HEK293 (cell line): ENCODE measurements at regions of chr18 and their contacts with region 1.

Region 1: DNA sequence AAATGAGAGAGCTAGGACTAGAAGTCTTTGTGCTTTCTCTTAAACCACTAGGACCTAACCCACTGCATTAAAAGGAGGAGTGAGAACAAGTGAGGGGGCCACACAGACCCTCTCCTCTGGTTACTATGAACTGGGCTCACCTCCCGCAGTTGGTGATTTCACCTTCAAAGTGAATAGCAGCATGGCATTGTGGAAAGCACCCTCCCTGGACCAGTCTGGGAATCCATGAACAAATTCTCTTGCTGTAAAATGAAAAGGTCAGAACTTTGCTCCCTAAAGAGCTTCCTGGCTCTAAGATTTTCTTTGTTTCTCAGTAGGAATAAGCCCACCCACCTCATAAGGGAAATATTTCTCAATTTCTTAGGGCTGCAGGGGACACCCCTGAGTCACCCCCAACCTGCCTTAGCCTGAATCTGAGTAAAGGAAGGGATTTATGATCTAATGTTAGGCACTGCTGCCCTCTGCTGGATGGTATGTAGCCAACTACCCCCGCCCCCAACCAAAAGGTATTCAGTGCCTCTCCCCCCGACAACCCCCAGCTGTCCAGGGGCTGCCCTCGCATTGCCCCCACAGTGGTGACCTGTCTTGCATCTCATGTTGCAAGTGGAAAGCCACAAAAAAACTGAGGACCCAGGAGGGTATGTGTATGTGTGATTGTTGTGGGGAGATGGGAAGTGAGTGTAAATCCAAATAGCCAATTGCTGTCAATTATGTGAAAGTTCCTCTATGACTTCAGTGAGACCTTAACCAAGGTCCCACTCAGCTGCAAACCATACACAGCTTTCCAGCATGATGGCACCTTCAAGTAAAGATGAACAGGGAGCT is 230.9 kb upstream of the SLC14A2 start:
- H3K4me3 ChIP-seq: no peak overlapping the region
- H3K27ac ChIP-seq: no peak overlapping the region
- H3K4me1 ChIP-seq: peaks cover 7% of the 10 kb centered on the region
- CTCF ChIP-seq: peak; percentile 57

Region 2: DNA sequence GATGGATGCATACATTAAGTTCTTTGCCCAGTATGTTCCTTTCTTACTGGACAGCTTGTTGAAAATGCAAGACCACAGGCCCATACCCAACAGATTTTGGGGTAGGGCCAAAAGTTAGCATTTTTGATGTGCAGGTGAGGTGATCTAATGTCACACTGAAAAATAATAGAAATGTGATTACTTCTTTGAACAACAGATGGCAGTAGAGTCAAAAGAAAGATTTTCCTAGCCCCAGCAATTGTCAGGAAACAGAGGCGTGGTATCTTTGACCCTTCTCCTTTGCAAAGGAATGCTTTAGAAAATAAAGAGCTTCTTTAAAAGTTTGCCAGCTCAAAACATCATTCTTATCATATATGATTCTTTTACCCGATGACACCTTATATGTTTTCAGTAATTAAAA is 1763.4 kb before region 1 on chr18:
- CTCF ChIA-PET with region 1: interaction called, 16 read pairs
- POLR2A ChIA-PET with region 1: no interaction called
- H3K4me3 ChIP-seq: no peak overlapping the region
- H3K27ac ChIP-seq: no peak overlapping the region
- H3K4me1 ChIP-seq: no peaks in the 10 kb centered on the region
- CTCF ChIP-seq: no peak

Region 3: DNA sequence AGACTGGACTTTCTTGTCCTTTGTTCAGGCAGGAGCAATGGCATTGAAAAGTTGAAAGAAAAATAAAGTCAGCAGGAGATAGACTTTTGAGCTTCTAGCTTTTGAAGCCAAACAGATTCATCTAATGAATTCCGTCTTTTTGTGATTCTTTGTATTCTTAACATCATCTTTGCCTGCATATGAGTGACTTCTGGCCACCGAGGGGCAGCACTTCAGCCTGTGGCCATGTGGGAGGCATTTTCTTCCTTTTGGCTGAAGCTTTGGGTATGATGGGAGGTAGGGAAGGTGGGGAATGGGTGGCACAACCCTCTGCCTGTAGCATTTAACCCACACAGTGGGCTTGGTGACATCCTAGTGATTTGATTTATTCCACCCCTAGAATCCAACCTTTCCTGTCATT is 483.1 kb before region 1 on chr18:
- CTCF ChIA-PET with region 1: interaction called, 13 read pairs
- POLR2A ChIA-PET with region 1: no interaction called
- H3K4me3 ChIP-seq: no peak overlapping the region
- H3K27ac ChIP-seq: no peak overlapping the region
- H3K4me1 ChIP-seq: no peaks in the 10 kb centered on the region; the same call in 1 of the 2 replicates
- CTCF ChIP-seq: no peak

Region 4: DNA sequence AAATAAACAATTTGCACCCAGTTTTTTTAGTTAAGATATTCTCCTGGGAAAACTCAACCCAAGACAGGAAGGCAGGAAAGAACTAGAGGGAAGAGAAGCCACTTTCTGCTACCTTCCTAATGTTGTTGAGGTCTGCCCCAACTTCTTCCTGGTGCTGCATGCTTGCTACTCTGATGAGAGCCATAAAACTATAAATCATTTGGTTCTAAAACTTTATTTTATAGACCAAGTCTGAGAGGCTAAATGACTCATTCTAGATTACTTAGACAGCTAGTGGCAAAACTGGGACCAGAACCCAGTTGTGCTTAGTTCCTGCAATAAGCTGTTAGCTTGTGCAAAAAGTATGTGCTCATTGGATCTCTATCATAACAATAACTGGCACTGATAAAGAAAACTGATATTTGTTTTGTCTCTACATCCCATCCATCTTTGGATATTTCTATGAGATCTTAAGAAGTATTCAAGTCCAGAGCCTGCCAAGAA is 114.0 kb before region 1 on chr18:
- CTCF ChIA-PET with region 1: interaction called, 98 read pairs
- POLR2A ChIA-PET with region 1: no interaction called
- H3K4me3 ChIP-seq: no peak overlapping the region
- H3K27ac ChIP-seq: no peak overlapping the region
- H3K4me1 ChIP-seq: 0 out of 2 replicates have a peak, but pooled peaks cover 2% of the 10 kb centered on the region
- CTCF ChIP-seq: no peak

Region 5: GRCh38 chr18:45370255-45371010 is 13.9 kb before region 1 on chr18:
- CTCF ChIA-PET with region 1: interaction called, 30 read pairs
- POLR2A ChIA-PET with region 1: no interaction called
- H3K4me3 ChIP-seq: no peak overlapping the region
- H3K27ac ChIP-seq: no peak overlapping the region
- H3K4me1 ChIP-seq: no peaks in the 10 kb centered on the region
- CTCF ChIP-seq: no peak

Region 6: GRCh38 chr18:45441110-45441842 is 56.9 kb after region 1 on chr18:
- CTCF ChIA-PET with region 1: interaction called, 10 read pairs
- POLR2A ChIA-PET with region 1: no interaction called
- H3K4me3 ChIP-seq: no peak overlapping the region
- H3K27ac ChIP-seq: no peak overlapping the region
- H3K4me1 ChIP-seq: no peaks in the 10 kb centered on the region
- CTCF ChIP-seq: 0 out of 2 replicates have a peak, but pooled peaks have one; percentile 26